Breast epithelium (tissue), 4 donors: ENCODE measurements at regions of chr5 and their contacts with region 1.

Region 1: DNA sequence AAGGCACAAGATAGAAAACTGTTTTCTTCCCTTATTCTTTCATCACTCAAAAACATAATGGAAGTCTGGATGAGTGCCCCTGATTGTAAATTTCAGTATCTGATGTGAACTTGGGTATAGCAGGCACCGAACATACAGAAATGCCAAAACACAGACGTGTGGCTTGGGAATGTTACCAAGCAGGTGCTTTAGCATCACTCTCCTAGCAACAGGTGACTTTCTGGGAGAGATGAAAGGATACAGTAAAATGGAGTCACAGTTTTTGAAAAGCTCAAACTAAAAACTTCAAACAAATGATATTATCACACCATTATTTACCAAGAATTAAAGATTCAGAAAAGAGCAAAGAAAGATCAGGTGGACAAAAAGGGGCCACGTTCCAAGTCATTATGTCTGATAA is 130.2 kb downstream of the DROSHA start:
- DNase-seq: no peak
- H3K4me3 ChIP-seq: no peak overlapping the region
- H3K27ac ChIP-seq: no peak overlapping the region
- H3K4me1 ChIP-seq: no peaks in the 10 kb centered on the region
- H3K27me3 ChIP-seq: no peaks in the 10 kb centered on the region
- CTCF ChIP-seq: no peak
- POLR2A ChIP-seq: no peak

Region 2: GRCh38 chr5:30069441-30070263 is 1332.0 kb before region 1 on chr5:
- intact Hi-C with region 1: no loop called
- DNase-seq: no peak
- H3K4me3 ChIP-seq: no peak overlapping the region
- H3K27ac ChIP-seq: no peak overlapping the region
- H3K4me1 ChIP-seq: no peaks in the 10 kb centered on the region
- H3K27me3 ChIP-seq: no peaks in the 10 kb centered on the region
- CTCF ChIP-seq: no peak
- POLR2A ChIP-seq: no peak

Region 3: GRCh38 chr5:31385774-31386537 is 15.7 kb before region 1 on chr5:
- intact Hi-C with region 1: loop called (anchors 2 kb)
- DNase-seq: no peak
- H3K4me3 ChIP-seq: no peak overlapping the region
- H3K27ac ChIP-seq: no peak overlapping the region
- H3K4me1 ChIP-seq: no peaks in the 10 kb centered on the region
- H3K27me3 ChIP-seq: no peaks in the 10 kb centered on the region
- CTCF ChIP-seq: no peak
- POLR2A ChIP-seq: no peak